Esophagus squamous epithelium (tissue), 5 donors: ENCODE measurements at regions of chr5 and their contacts with region 1.

Region 1: GRCh38 chr5:131165119-131165727 is at the start of gene HINT1:
- DNase-seq: peak; percentile 62
- H3K4me3 ChIP-seq: peak within 1 kb of the TSS; percentile 66 to 97 (median 93)
- H3K27ac ChIP-seq: peak within 1 kb of the TSS; percentile 94 to 99 (median 98)
- H3K4me1 ChIP-seq: peaks cover 6 to 44% (median 15%) of the 10 kb centered on the region in 3 donors
- H3K27me3 ChIP-seq: no peaks in the 10 kb centered on the region
- CTCF ChIP-seq: peak in 2 of 6 experiments; percentile 8 to 29
- POLR2A ChIP-seq: peak in 3 of 4 donors; percentile 55 to 90 (median 73)
- total RNA-seq, gene HINT1: 65.0 to 241 (median 207) TPM

Region 2: GRCh38 chr5:131198625-131199024 is 33.4 kb after region 1 on chr5:
- intact Hi-C with region 1: no loop called
- DNase-seq: no peak
- H3K4me3 ChIP-seq: no peak overlapping the region
- H3K27ac ChIP-seq: no peak overlapping the region
- H3K4me1 ChIP-seq: no peaks in the 10 kb centered on the region
- H3K27me3 ChIP-seq: no peaks in the 10 kb centered on the region
- CTCF ChIP-seq: no peak
- POLR2A ChIP-seq: no peak

Region 3: DNA sequence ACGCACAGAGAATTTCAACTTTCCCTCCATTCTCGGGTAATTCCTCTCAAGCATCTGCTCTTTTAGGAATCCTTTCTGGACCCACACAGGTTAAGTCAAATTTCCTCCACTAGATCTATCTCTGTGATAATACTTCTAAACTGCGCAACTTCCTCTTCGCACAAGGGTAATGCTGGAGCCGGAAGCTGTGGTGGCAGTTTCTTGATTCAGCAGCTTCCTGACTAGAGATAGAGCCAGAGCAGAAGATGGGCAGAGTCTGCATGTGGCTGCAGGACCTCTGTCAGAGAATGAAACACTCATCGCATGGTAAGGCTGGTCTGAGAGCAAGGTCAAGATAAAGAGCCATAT is 87.6 kb after region 1 on chr5:
- intact Hi-C with region 1: loop called (anchors 10 kb)
- DNase-seq: peak; percentile 7
- H3K4me3 ChIP-seq: peak overlapping the region in 3 of 4 donors; percentile 12 to 24 (median 21)
- H3K27ac ChIP-seq: peak overlapping the region; percentile 16 to 73 (median 50)
- H3K4me1 ChIP-seq: peaks cover 0 to 4% (median 0%) of the 10 kb centered on the region in 3 donors
- H3K27me3 ChIP-seq: no peaks in the 10 kb centered on the region
- CTCF ChIP-seq: no peak
- POLR2A ChIP-seq: peak in 2 of 4 donors; percentile 42 to 76

Region 4: DNA sequence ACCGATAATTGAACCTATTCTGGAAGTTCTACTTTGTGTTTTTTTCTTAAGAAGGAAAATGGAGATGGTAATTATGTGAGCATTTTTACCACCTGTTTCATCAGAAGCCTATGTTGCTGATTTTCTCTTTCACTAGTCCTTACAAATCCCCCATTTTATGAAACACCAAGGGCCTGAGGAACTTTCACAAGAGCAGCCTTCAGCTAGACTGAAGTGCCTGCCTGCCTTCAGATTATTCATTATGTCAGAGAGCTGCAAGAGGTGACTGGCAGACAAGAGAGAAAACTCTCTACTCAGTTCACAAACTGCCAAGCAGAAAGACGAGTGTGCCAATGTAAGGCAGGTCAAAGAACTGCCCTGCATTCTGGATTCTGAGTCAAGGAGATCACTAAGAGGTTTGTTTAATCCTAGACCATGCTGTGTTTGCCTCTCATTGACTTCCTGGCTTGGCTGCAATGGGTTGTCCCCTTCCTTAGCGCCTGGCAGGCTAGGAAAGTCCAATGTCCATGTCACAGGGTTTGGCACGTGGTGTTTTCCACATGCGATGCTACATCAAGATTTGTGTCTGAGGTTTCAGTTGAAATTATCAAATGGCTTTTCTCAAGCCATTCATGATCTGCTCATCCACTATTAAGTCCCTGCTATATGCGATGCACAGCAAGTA is 241.9 kb after region 1 on chr5:
- intact Hi-C with region 1: loop called (anchors 10 kb)
- DNase-seq: no peak
- H3K4me3 ChIP-seq: no peak overlapping the region
- H3K27ac ChIP-seq: no peak overlapping the region
- H3K4me1 ChIP-seq: no peaks in the 10 kb centered on the region
- H3K27me3 ChIP-seq: no peaks in the 10 kb centered on the region
- CTCF ChIP-seq: no peak
- POLR2A ChIP-seq: no peak